ENCODE measurements at regions of chr11 and their contacts with region 1.

Region 1: DNA sequence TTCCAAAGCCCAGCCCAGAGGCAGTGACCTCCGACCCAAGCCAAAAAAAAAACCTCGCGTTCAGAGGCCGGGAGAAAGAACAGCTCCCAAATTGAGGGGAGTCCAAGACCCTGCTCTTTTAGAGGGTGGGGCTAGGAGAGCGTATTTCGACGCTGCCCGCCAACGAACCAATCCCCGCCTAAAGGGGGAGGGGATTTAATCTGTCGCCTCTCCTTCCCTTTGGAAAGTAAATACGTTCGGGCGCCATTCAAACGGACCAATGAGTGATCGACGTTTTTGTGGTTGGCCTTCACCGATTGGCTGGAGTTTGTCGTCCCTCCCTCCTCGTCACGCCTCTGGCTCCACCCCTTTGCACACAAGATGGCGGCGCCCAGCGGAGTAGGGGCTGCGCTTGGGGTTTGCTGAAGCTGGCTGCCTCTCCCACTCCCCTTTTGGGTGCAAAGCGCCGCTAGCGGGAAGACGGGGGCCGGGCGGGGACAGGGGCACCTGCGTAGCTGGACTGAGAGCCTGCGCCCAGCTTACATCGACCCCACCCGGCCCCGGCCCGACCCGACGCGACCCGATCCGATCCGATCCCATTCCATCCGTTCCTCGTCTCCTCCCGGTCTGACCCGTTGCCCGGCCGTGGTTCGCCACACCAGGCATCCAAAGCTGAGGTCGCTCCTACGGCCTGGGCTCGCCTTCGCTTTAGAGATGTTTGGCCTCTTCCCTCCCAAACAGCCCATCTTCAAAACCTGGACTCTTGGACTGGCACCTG is at the start of gene RNF26:
- DNase-seq: peak; percentile 93
- H3K4me3 ChIP-seq: peak within 1 kb of the TSS; percentile 94
- H3K27ac ChIP-seq: peak within 1 kb of the TSS; percentile 57
- H3K27me3 ChIP-seq: no peaks in the 10 kb centered on the region
- CTCF ChIP-seq: no peak
- polyA plus RNA-seq, gene RNF26: 27.1 and 35.3 TPM in 2 replicates

Region 2: GRCh38 chr11:119095066-119095880 is 239.1 kb before region 1 on chr11:
- CTCF ChIA-PET with region 1: interaction called, 4 read pairs
- POLR2A ChIA-PET with region 1: interaction called, 27 read pairs
- DNase-seq: peak; percentile 100
- H3K4me3 ChIP-seq: peak overlapping the region; percentile 76
- H3K27ac ChIP-seq: peak overlapping the region; percentile 70
- H3K27me3 ChIP-seq: no peaks in the 10 kb centered on the region
- CTCF ChIP-seq: no peak

Region 3: GRCh38 chr11:119205574-119206510 is 128.5 kb before region 1 on chr11 and contains the start of gene CBL:
- CTCF ChIA-PET with region 1: interaction called, 27 read pairs
- POLR2A ChIA-PET with region 1: interaction called, 12 read pairs
- DNase-seq: peak; percentile 64
- H3K4me3 ChIP-seq: peak within 1 kb of the TSS; percentile 93
- H3K27ac ChIP-seq: peak within 1 kb of the TSS; percentile 61
- H3K27me3 ChIP-seq: peaks cover 2% of the 10 kb centered on the region
- CTCF ChIP-seq: peak; percentile 87
- polyA plus RNA-seq, gene CBL: 19.9 and 24.3 TPM in 2 replicates

Region 4: GRCh38 chr11:119323538-119324033 is 10.8 kb before region 1 on chr11:
- CTCF ChIA-PET with region 1: interaction called, 161 read pairs
- POLR2A ChIA-PET with region 1: interaction called, 34 read pairs
- DNase-seq: no peak
- H3K4me3 ChIP-seq: no peak overlapping the region
- H3K27ac ChIP-seq: no peak overlapping the region
- H3K27me3 ChIP-seq: no peaks in the 10 kb centered on the region
- CTCF ChIP-seq: peak; percentile 81

Region 5: GRCh38 chr11:119363851-119364590 is 29.7 kb after region 1 on chr11:
- CTCF ChIA-PET with region 1: interaction called, 14 read pairs
- POLR2A ChIA-PET with region 1: interaction called, 14 read pairs
- DNase-seq: no peak
- H3K4me3 ChIP-seq: peak overlapping the region; percentile 51; the same call in 1 of the 2 replicates
- H3K27ac ChIP-seq: no peak overlapping the region
- H3K27me3 ChIP-seq: peaks cover 15% of the 10 kb centered on the region
- CTCF ChIP-seq: no peak

Region 6: DNA sequence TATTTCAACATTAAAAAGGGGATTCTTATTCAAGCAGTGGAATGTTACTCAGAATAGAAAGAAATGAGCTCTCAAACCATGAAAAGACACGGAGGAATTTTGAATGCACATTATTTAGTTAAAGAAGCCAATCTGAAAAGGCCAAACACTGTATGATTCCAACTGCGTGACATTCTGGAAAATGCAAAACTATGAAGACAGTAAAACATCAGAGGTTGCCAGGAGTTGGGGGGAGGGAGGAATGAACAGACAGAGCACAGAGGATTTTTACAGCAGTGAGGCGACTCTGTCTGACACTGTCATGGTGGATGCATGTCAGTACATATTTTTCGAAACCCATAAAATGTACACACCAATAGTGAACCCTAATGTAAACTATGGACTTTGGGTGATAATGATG is 111.5 kb after region 1 on chr11:
- CTCF ChIA-PET with region 1: no interaction called
- POLR2A ChIA-PET with region 1: interaction called, 12 read pairs
- DNase-seq: no peak
- H3K4me3 ChIP-seq: no peak overlapping the region
- H3K27ac ChIP-seq: no peak overlapping the region
- H3K27me3 ChIP-seq: no peaks in the 10 kb centered on the region
- CTCF ChIP-seq: no peak

Region 7: DNA sequence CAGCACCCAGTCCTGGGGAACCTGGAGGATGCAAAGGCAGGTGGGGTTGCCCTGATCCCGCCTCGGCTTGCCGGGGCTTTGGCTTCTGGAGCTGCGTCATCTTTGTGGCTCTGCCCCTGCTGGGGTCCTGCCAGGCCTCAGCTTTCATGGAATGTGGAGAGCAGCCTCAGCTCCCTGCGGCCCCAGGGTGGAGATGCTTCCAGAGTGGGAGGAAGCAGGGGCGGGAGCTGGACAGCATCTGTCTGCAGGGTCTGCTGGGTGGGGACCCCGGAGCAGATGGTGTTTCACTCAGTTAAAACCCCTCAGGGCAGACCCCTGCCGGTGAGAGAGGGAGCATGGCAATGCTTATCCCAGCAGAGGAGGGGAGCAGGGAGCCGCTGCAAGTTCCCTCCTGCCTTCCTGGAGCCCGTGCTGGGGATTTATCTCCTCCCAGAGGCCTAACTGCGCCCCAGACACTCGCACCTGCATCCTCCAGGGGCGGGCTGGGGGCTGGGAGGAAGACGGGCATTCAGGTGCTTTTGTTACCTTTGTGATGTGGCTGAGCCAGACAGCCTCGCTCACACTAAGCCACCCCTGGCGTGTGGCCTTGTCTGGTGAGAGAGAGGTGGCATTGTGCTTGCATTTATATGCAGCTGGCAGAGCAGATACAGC is 1192.9 kb after region 1 on chr11:
- CTCF ChIA-PET with region 1: no interaction called
- POLR2A ChIA-PET with region 1: no interaction called
- DNase-seq: peak; percentile 47
- H3K4me3 ChIP-seq: no peak overlapping the region
- H3K27ac ChIP-seq: peak overlapping the region; percentile 21
- H3K27me3 ChIP-seq: no peaks in the 10 kb centered on the region
- CTCF ChIP-seq: peak; percentile 24